ENCODE measurements at regions of chr1 and their contacts with region 1.

Region 1: GRCh38 chr1:206635080-206635977 is at the start of gene DYRK3:
- DNase-seq: peak; percentile 93
- H3K4me3 Mint-ChIP-seq: peak within 1 kb of the TSS; percentile 75
- H3K27ac Mint-ChIP-seq: peak within 1 kb of the TSS; percentile 89
- H3K4me1 Mint-ChIP-seq: peaks cover 23% of the 10 kb centered on the region
- H3K27me3 Mint-ChIP-seq: peaks cover 11% of the 10 kb centered on the region
- total RNA-seq, gene DYRK3: 4.0 to 4.3 TPM

Region 2: DNA sequence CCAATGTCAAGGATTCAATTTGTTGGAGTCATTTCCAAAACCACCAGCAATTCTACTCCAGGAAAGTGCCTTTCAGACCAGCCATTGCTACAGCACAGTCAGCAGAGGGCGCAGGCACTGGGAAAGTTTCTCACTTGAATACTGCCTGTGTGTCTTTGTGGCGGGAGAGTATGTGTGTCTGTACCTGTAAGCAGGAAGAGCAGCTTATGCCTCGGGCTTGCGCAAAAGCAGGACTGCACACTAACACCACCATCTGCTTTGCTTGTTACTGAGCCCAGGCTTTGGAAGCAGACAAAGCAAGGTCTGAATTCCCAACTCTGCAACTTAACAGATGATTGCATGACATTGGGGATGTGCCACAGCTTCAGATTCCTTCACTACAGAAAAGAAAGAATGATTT is 604.6 kb before region 1 on chr1:
- CTCF ChIA-PET with region 1: no interaction called
- POLR2A ChIA-PET with region 1: interaction called, 10 read pairs
- DNase-seq: peak; percentile 84
- H3K4me3 Mint-ChIP-seq: no peak overlapping the region
- H3K27ac Mint-ChIP-seq: no peak overlapping the region
- H3K4me1 Mint-ChIP-seq: peaks cover 22% of the 10 kb centered on the region
- H3K27me3 Mint-ChIP-seq: peaks cover 39% of the 10 kb centered on the region

Region 3: DNA sequence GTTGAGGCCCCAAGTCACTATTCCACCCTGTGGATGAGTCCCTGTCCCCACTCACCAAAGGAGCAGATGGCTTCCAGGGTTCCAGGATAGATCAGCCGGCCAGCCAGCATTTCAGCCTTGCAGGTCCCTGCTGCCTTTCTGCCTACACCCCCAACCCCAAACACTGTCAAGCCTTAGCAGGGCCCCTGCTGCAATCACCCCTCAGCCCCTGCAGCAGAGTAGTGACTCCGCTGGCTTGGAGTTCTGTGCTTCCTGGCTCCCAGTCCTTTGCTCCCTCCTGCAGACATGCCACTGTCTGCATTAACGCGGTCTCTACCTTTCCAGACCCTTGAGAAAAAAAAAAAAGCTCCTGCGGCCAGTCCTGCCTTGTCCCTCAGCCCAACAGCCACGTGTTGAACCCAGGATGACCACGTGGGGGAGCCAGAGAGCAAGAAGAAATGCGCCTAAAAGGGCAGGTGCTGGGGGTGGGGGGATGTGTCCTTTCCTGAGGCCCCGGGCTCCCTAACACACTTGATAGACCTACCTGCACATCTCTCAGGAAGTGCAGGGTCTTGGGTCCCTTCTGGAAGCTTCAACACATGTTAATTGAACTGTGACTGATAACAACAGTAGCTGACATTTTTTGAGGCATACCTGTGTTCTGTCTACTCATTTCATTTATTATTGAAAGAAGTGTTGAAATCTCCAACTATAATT is 90.6 kb before region 1 on chr1:
- CTCF ChIA-PET with region 1: no interaction called
- POLR2A ChIA-PET with region 1: no interaction called
- DNase-seq: peak; percentile 85
- H3K4me3 Mint-ChIP-seq: no peak overlapping the region
- H3K27ac Mint-ChIP-seq: peak overlapping the region; percentile 60
- H3K4me1 Mint-ChIP-seq: peaks cover 25% of the 10 kb centered on the region
- H3K27me3 Mint-ChIP-seq: no peaks in the 10 kb centered on the region

Region 4: GRCh38 chr1:206583707-206584648 is 51.4 kb before region 1 on chr1:
- CTCF ChIA-PET with region 1: no interaction called
- POLR2A ChIA-PET with region 1: no interaction called
- DNase-seq: peak; percentile 89
- H3K4me3 Mint-ChIP-seq: peak overlapping the region; percentile 49
- H3K27ac Mint-ChIP-seq: peak overlapping the region; percentile 91
- H3K4me1 Mint-ChIP-seq: peaks cover 93% of the 10 kb centered on the region
- H3K27me3 Mint-ChIP-seq: no peaks in the 10 kb centered on the region

Region 5: DNA sequence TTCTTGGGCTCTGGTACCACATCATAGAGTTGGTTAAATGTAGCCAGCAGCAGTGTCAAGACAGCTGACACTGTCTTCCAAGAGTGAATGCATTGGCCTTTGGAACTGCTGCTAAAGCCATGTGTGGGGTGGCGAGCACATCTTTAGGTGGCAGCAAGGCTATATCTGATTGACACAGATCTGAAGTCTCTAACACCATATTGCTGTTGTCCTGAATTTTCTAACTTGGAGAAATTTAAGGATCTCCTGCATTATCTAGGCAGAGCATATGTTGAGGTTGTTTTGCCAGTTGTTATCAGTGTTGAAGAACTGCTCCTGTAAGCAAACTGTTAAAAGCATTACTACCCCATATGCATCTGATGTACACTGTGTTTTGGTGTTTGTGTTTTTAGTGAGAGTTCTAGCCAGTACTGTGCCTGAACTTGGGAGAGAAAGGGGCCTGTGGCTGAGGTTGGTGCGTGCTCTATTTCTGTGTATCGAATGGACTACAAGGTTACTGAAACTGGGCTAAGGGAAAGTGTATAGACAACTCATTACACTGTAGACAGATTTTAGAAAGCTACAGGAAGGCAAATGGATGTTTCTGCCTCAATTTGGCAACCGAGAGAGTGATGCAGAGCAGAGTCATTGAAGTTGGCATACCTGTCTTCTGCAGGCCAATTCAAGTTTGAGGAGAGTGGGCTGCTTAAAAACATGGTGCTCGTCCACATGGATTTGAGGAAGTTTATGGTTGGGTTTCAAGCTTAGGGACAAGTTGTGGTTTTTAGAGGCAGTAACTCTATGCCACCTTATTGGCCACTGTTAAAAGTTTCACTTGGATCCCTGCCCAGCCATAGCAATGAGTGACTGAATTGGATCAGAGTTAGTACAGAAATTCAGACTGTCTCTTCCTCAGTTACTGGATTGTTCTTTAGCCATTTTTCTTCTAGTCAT is 16.9 kb after region 1 on chr1:
- CTCF ChIA-PET with region 1: interaction called, 21 read pairs
- POLR2A ChIA-PET with region 1: no interaction called
- DNase-seq: no peak
- H3K4me3 Mint-ChIP-seq: no peak overlapping the region
- H3K27ac Mint-ChIP-seq: no peak overlapping the region
- H3K4me1 Mint-ChIP-seq: no peaks in the 10 kb centered on the region
- H3K27me3 Mint-ChIP-seq: peaks cover under 1% of the 10 kb centered on the region

Region 6: DNA sequence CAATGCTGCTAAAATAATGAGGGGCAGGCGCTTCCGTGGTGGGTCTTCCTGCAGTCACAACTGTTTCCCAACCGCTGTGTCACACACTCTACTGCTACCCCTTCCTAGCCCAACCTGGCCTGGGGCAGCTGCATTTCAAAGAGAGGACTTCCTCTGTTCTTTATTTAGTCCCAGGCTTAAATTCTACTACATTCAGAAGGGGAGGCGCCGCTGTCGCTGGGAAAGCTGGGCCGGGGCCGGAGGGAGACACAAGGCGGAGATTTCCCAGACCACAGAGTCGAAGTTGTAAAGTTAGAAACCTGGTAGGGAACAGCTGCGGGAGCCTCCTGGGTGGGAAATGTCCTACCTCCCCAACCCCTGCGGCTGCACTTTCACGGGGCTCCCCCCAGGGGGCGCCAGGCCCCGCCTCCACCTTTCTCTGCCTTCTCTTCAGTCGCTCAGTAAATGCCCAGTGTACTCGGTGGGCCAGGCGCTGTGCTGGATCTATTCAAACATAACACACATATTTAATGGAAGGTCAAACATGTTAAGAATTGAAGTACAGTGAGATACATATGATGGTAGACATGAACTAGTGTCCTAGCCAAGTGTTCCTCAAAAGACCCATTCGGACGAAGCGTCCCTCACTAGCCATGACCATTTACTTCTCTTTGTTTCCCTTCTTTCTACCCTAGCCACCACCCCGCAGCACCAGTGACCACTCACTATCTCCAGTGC is 23.1 kb after region 1 on chr1:
- CTCF ChIA-PET with region 1: interaction called, 45 read pairs
- POLR2A ChIA-PET with region 1: interaction called, 5 read pairs
- DNase-seq: peak; percentile 44
- H3K4me3 Mint-ChIP-seq: no peak overlapping the region
- H3K27ac Mint-ChIP-seq: no peak overlapping the region
- H3K4me1 Mint-ChIP-seq: peaks cover 14% of the 10 kb centered on the region
- H3K27me3 Mint-ChIP-seq: peaks cover 25% of the 10 kb centered on the region

Measured in activated CD4-positive, alpha-beta T cell treated with anti-CD3 and anti-CD28 coated beads, Interleukin-2, amount 10 ng/mL, durations not matched to agents 7 days and 5 days (primary cell).